OCI-LY7 (cell line): ENCODE measurements at regions of chr20 and their contacts with region 1.

Region 1: DNA sequence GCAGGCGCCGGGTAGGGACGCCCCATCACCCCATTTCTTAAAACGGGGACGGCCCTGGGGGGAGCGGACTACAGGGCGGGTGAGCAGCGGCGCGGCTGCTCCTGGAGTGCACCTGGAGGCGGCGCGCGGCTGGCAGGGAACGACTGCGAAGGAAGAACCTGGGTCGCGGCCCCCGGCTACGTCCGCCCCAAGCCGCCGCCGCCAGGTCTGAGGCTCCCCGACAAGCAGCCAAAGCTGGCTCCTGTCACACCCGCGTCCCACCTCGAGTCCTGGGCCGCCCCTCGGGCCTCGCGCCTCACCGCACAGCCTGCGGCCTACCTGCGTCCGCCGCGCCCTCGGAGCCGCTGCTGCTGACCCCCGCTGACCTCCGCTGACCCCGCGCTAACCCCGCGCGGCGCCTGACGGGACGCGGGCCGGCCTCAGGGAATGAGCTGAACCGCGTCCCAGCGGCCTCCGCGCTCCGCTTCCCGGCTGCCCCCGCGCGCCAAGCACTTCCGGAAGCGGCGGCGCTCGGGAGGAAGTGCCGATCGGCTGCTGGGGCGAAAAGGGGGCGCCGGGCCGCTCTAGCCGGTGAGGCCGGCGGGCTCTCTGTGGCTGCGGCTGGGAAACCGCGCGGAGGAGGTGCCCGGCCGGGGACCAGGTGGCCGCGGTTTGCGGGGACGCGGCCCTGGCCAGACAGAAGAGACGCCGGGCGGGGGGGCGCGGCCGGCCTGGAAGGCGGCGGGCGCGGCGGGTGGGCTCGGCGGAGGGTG is at the starts of genes ARFRP1 and ZGPAT:
- DNase-seq: peak; percentile 90
- H3K4me3 ChIP-seq: peak within 1 kb of the TSS; percentile 97
- H3K27ac ChIP-seq: peak within 1 kb of the TSS; percentile 71
- H3K4me1 ChIP-seq: peaks cover 31% of the 10 kb centered on the region
- CTCF ChIP-seq: no peak
- total RNA-seq, gene ARFRP1: 47.9 and 53.3 TPM in 2 replicates
- total RNA-seq, gene ZGPAT: 43.1 and 43.9 TPM in 2 replicates

Region 2: GRCh38 chr20:63735859-63736718 is 28.4 kb after region 1 on chr20 and contains the start of gene LIME1:
- CTCF ChIA-PET with region 1: interaction called, 5 read pairs
- POLR2A ChIA-PET with region 1: interaction called, 13 read pairs
- intact Hi-C with region 1: loop called (anchors 1 kb)
- DNase-seq: peak; percentile 83
- H3K4me3 ChIP-seq: peak within 1 kb of the TSS; percentile 70
- H3K27ac ChIP-seq: peak within 1 kb of the TSS; percentile 89
- H3K4me1 ChIP-seq: peaks cover 69% of the 10 kb centered on the region
- CTCF ChIP-seq: peak; percentile 15; the same call in 1 of the 2 replicates
- total RNA-seq, gene LIME1: 66.3 and 76.4 TPM in 2 replicates

Region 3: GRCh38 chr20:63747622-63748069 is 39.9 kb after region 1 on chr20:
- CTCF ChIA-PET with region 1: no interaction called
- POLR2A ChIA-PET with region 1: no interaction called
- intact Hi-C with region 1: loop called (anchors 2 kb)
- DNase-seq: peak; percentile 87
- H3K4me3 ChIP-seq: no peak overlapping the region
- H3K27ac ChIP-seq: peak overlapping the region; percentile 60
- H3K4me1 ChIP-seq: peaks cover 28% of the 10 kb centered on the region
- CTCF ChIP-seq: no peak

Region 4: DNA sequence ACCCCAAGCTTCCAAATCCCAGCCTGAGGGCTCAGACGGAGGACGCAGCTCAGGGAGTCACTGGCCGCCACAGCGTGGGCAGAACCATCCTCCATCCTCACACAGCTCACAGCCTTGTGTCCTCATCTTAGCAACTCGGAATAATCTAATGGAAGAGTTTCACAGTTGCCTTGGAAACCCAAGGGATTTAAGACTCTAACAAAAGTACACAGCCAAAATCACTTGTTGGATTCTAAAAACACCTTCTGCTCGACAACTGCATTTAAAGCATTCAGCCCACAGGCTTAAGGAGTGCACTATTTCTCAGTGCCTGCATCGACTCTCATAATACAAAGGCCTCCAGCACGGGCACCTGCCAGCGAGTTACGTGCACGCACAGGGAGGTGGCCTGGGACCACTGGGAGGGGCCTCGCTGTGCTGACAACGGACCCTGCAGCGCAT is 78.0 kb after region 1 on chr20:
- CTCF ChIA-PET with region 1: interaction called, 3 read pairs
- POLR2A ChIA-PET with region 1: no interaction called
- intact Hi-C with region 1: loop called (anchors 5 kb)
- DNase-seq: no peak
- H3K4me3 ChIP-seq: no peak overlapping the region
- H3K27ac ChIP-seq: no peak overlapping the region
- H3K4me1 ChIP-seq: peaks cover 32% of the 10 kb centered on the region
- CTCF ChIP-seq: no peak

Region 5: DNA sequence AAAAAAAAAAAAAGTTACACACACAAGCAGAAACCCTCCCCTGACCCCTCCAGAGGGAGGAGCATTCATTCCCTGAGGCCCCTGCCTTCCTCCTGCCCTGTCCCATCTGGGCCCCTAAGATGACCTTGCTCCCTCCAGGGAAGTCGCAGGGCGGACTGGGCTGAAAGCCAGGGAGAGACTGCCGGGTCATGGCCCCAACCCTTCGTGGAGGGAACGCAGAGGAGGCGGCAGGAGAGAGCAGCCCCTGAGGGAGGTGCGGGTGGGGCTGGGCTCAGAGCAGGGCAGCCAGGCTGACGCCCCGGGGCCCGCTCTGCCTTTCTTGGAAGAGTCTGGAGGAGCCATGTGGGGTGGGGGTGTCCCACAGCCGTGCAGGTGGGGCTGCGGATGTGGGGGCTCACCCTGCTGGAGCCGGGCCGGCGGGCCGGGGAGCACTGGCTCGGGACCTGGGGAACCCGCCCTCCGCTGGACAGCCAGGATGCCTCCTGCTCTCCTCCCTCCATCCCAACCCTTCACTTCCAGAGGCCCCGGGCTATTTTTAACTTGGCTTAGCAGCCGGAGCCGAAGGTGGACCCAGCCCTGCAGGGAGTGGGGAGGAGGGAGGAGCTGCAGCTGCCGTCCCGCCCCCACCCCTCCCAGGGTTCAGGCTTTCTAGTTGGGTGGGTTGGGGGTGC is 138.5 kb after region 1 on chr20:
- CTCF ChIA-PET with region 1: no interaction called
- POLR2A ChIA-PET with region 1: no interaction called
- intact Hi-C with region 1: no loop called
- DNase-seq: no peak
- H3K4me3 ChIP-seq: no peak overlapping the region
- H3K27ac ChIP-seq: no peak overlapping the region
- H3K4me1 ChIP-seq: no peaks in the 10 kb centered on the region
- CTCF ChIP-seq: no peak